Dorsolateral prefrontal cortex (tissue), 120 donors: ENCODE measurements at regions of chr7 and their contacts with region 1.

Region 1: GRCh38 chr7:41977151-41977651 is 259.8 kb downstream of the GLI3 start:
- DNase-seq: peak in 1 of 10 donors; percentile 45
- H3K4me3 ChIP-seq: no peak overlapping the region
- H3K27ac ChIP-seq: no peak overlapping the region
- H3K27me3 ChIP-seq: peaks cover 0 to 6% (median 0%) of the 10 kb centered on the region in 45 donors
- CTCF ChIP-seq: peak; percentile 48 to 91 (median 82)

Region 2: GRCh38 chr7:42690794-42691639 is 713.8 kb after region 1 on chr7:
- intact Hi-C with region 1: loop called (anchors 10 kb)
- DNase-seq: no peak
- H3K4me3 ChIP-seq: no peak overlapping the region
- H3K27ac ChIP-seq: no peak overlapping the region
- H3K27me3 ChIP-seq: peaks cover 0 to 4% (median 0%) of the 10 kb centered on the region in 45 donors
- CTCF ChIP-seq: peak in 44 of 56 donors; percentile 10 to 57 (median 33)

Region 3: GRCh38 chr7:42831718-42832431 is 854.7 kb after region 1 on chr7:
- intact Hi-C with region 1: loop called in 1 of 2 experiments (anchors 5 kb)
- DNase-seq: peak in 8 of 10 donors; percentile 7 to 72 (median 56)
- H3K4me3 ChIP-seq: no peak overlapping the region
- H3K27ac ChIP-seq: no peak overlapping the region
- H3K27me3 ChIP-seq: peaks cover 0 to 10% (median 0%) of the 10 kb centered on the region in 45 donors
- CTCF ChIP-seq: peak; percentile 49 to 90 (median 75)

Region 4: DNA sequence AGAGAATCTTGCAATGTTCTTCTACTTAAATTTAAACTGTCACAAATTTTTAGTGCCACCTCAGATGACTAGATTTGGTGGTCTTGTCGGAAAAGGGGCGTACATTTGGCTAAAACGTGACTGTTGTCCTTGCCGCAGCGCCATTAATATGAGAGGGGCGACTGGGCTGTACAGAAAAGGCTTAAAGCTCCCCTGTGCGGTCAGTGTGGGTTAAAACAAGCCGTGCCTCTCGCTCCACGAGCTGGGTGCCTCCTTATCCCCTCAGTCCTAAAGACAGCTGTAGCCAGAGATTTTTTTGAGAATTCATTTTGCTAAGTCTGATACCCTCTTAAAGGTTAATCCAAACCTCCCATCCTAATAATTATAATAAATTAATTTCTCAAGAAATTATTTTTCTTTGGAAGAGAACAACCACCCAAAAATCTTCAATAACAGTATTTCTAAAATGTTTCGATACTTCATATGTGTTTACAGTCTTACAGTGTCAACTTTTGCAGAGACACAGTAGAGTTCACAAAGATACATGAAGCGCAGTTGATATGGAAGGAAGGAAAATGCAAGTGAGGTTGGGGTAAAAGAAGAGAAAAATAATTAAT is 866.1 kb after region 1 on chr7:
- intact Hi-C with region 1: loop called in 1 of 2 experiments (anchors 5 kb)
- DNase-seq: peak in 7 of 10 donors; percentile 15 to 56 (median 35)
- H3K4me3 ChIP-seq: peak overlapping the region in 38 of 59 donors; percentile 9 to 50 (median 34)
- H3K27ac ChIP-seq: no peak overlapping the region
- H3K27me3 ChIP-seq: peaks cover 0 to 10% (median 0%) of the 10 kb centered on the region in 45 donors
- CTCF ChIP-seq: peak in 55 of 56 donors; percentile 15 to 75 (median 56)